Heart right ventricle (tissue), 16 donors: ENCODE measurements at regions of chr1 and their contacts with region 1.

Region 1: GRCh38 chr1:37883671-37884070 is 24.3 kb upstream of the MTF1 start:
- DNase-seq: no peak
- ATAC-seq: no peak
- H3K4me3 ChIP-seq: no peak overlapping the region
- H3K27ac ChIP-seq: peak overlapping the region in 1 of 10 donors; percentile 40
- H3K4me1 ChIP-seq: no peaks in the 10 kb centered on the region
- H3K27me3 ChIP-seq: no peaks in the 10 kb centered on the region
- CTCF ChIP-seq: no peak

Region 2: DNA sequence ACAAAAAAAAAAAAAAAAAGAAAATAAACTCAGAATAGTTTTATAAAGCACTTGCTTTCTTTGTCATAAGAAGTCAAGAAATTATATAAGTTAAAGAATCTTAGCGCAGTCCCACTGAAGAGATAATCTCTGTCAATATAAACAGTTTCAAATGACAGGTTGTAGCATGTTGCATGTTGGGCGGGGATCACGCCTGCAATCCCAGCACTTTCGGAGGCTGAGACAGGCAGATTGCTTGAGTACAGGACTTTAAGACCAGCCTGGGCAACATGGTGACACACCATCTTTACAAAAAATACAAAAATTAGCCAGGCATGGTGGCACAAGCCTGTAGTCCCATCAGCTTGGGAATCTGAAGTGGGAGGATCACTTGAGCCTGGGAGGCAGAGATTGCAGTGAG is 81.6 kb after region 1 on chr1:
- intact Hi-C with region 1: loop called in 1 of 10 experiments (anchors 10 kb)
- DNase-seq: no peak
- ATAC-seq: no peak
- H3K4me3 ChIP-seq: no peak overlapping the region
- H3K27ac ChIP-seq: no peak overlapping the region
- H3K4me1 ChIP-seq: no peaks in the 10 kb centered on the region
- H3K27me3 ChIP-seq: no peaks in the 10 kb centered on the region
- CTCF ChIP-seq: no peak

Region 3: GRCh38 chr1:37983546-37983945 is 99.9 kb after region 1 on chr1:
- intact Hi-C with region 1: loop called in 4 of 10 experiments (anchors 5 to 10 kb)
- DNase-seq: no peak
- ATAC-seq: no peak
- H3K4me3 ChIP-seq: no peak overlapping the region
- H3K27ac ChIP-seq: no peak overlapping the region
- H3K4me1 ChIP-seq: peaks cover 0 to 11% (median 5%) of the 10 kb centered on the region in 9 donors
- H3K27me3 ChIP-seq: no peaks in the 10 kb centered on the region
- CTCF ChIP-seq: no peak

Region 4: DNA sequence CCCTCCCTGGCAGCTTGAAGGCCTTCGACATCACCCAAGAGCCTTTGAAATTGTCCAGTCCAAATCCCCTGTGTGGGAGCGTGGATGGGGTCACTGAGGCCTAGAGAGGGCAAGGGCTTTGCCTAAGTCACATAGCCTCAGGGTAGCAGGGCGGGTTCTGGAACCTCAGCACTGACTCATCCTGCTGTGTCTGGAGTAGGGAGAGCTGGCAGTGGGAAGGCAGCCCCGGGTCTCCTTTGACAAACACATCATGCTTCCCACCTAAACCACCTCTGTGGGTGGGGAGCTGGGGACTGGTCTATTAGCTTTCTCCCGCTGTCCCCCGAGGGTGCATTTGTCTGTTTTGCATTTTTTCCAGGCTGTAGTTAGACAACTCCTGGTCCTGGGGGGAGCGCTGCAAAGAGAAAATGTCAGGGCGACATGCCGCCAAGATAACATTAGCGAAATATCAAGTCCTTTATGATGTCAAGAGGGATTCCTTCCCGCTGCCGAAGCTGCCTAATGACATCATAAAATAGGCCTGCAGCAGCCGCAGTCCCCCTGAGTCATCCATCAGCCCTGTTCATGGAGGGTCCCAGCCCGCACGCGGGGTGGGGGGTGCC is 239.8 kb after region 1 on chr1:
- intact Hi-C with region 1: no loop called
- DNase-seq: no peak
- ATAC-seq: no peak
- H3K4me3 ChIP-seq: no peak overlapping the region
- H3K27ac ChIP-seq: no peak overlapping the region
- H3K4me1 ChIP-seq: no peaks in the 10 kb centered on the region
- H3K27me3 ChIP-seq: peaks cover 0 to 8% (median 3%) of the 10 kb centered on the region in 7 donors
- CTCF ChIP-seq: no peak